Testis (tissue), 5 donors: ENCODE measurements at regions of chr15 and their contacts with region 1.

Region 1: GRCh38 chr15:64153480-64154367 is 2.2 kb downstream of the SNX22 start:
- DNase-seq: peak; percentile 92
- H3K4me3 ChIP-seq: no peak overlapping the region
- H3K27ac ChIP-seq: no peak overlapping the region
- H3K4me1 ChIP-seq: peaks cover 19% of the 10 kb centered on the region
- H3K27me3 ChIP-seq: no peaks in the 10 kb centered on the region
- CTCF ChIP-seq: peak; percentile 87 to 99 (median 92)
- POLR2A ChIP-seq: no peak

Region 2: DNA sequence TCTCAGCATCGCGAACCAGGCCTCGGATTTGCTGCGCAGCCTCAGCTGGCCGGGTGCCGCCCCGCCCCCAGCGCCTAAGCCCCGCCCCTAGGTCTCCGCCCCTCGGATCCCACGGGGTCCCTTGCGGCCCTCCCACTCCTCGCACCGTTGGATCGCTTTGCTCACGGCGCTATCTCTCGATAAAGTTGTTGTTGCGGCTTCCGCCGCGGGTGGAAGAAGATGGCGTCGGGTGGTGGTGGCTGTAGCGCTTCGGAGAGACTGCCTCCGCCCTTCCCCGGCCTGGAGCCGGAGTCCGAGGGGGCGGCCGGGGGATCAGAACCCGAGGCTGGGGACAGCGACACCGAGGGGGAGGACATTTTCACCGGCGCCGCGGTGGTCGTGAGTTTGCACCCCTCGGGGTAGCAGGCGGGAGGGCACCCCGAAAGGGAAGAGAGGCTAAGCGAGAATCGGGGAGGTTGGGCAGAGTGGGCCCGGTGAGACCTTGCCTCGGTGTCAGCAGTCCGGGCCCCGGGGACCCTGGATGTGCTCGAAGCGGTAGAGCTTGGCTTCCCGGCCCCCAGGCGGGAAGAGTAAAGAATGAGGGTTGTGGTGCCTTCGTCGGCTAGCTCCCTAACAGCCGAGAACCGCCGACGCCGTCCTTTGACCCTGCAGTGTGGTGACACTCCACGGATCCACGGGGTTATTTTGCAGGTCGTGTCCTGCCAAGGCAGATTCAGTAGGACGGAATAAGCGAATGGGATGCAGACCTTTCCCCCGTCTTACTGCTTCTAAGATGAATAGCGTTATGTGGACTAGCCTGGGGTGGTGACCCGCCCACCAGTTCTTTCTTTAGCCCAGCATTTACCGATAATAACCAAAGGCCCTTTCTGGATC is 57.7 kb before region 1 on chr15 and contains the start of gene SNX1:
- intact Hi-C with region 1: loop called (anchors 5 kb)
- DNase-seq: peak; percentile 96
- H3K4me3 ChIP-seq: peak within 1 kb of the TSS; percentile 81 to 97
- H3K27ac ChIP-seq: peak within 1 kb of the TSS; percentile 79 to 93
- H3K4me1 ChIP-seq: peaks cover 25% of the 10 kb centered on the region
- H3K27me3 ChIP-seq: no peaks in the 10 kb centered on the region
- CTCF ChIP-seq: peak in 1 of 3 experiments; percentile 32
- POLR2A ChIP-seq: peak; percentile 70
- total RNA-seq, gene SNX1: 79.1 to 86.0 TPM

Region 3: DNA sequence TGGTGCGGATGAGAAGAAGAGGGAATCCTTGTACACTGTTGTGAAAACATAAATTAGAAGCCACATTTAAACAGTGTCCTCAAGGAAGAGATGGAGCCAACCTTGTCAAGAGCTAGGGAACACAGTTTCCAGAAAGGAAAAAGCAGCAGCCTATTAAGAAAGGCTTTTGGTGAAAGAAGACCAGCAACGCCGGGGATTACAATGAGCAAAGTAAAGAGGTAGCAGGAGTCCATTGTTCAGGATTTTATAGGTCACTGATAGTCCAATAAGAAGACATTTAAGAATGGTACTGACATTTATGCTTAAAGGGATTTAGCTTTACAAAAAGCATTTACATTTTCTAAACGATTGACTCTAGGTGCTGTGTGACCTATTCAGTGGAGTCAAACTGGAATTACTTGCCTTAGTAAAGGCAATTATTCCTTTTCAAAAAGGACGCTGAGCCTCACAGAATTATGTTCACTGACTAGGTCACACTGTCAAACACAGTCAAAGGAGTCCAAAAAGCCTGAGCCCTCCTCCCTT is 161.5 kb after region 1 on chr15:
- intact Hi-C with region 1: no loop called
- DNase-seq: no peak
- H3K4me3 ChIP-seq: no peak overlapping the region
- H3K27ac ChIP-seq: no peak overlapping the region
- H3K4me1 ChIP-seq: peaks cover 6% of the 10 kb centered on the region
- H3K27me3 ChIP-seq: no peaks in the 10 kb centered on the region
- CTCF ChIP-seq: no peak
- POLR2A ChIP-seq: no peak